Left ventricle myocardium superior (tissue), 1 donor: ENCODE measurements at regions of chr20 and their contacts with region 1.

Region 1: GRCh38 chr20:50165684-50166554 is 12.4 kb upstream of the PEDS1 start:
- DNase-seq: peak; percentile 95
- ATAC-seq: peak; percentile 94

Region 2: DNA sequence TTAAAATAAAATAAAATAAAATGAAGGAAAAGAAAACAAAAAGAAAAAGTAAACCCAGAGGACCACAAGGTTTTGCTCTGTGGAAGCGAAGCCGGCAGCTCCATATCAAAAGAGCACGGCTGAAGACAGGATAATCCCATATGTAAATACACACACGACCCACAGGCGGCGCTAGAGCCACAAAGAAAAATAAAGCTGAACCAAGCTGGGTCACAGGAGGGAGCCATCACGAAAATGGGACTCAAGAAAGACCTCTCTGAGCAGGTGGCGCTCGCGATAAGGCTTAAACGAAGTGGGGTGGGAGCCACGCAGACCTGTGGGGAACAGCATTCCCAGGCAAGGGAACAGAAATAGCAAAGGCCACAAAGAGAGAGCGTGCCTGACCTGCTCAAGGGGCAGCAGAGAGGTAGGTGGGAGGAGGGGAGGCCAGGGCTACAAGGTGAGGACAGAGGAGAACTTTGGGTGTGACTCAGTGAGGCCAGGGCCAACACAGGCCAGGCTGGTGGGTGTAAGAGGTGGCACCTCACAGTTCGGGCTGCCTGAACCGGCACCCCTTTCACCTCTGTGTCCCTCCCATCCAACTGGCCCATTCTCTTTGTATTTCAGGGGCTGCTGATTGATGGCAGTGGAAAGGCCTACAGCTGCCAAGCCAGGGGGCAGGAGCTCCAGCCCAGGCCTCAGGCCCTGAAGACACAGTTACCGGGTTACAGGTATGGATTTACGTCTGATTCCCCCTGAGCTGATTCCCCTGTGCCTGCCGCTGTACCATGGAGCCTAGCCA is 624.0 kb before region 1 on chr20:
- intact Hi-C with region 1: no loop called
- DNase-seq: peak; percentile 58
- ATAC-seq: peak; percentile 79

Region 3: DNA sequence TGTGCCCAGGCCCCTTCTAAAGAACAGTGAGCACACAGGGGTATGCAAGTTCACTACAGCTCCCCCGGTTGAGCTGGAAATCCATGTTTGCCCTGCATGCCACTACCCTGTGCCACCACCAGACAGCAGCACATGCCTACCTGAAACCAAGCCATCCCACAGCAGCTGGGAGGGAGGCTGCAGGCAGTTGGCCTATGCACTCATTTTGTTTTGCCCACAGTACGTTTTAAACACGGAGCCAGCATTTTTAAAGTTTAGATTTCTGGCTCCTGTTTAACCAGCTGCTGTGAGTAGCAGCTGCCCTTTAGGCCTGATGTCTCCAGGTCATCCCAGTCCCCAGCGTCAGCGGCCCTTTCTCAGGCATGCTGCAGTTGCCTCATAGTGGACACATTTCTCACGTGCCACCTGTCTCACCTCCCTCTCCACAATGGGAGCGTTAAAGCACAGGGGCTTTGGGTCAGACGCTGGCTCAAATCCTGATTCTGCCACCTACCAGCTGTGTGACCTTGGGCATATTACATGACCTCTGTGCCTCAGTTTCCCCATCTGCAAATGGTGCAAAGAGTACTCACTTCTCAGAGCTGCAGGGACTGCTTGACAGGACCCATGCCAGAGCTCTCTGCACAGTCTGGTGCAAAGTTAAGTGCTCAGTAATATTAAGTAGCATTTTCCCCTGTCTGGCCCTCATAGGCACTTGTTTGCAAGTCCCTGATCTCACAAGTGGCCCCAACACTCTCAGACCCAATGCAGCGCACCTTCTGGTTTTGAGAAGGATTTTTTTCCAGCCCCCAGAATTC is 44.8 kb before region 1 on chr20:
- intact Hi-C with region 1: loop called (anchors 5 kb)
- DNase-seq: peak; percentile 67
- ATAC-seq: peak; percentile 76